ENCODE measurements at regions of chr16 and their contacts with region 1.

Region 1: GRCh38 chr16:3880623-3881498 is at the start of gene CREBBP:
- DNase-seq: peak; percentile 86 to 93 (median 88)
- H3K4me3 ChIP-seq: peak within 1 kb of the TSS; percentile 57 to 88 (median 82)
- H3K4me3 Mint-ChIP-seq: peak within 1 kb of the TSS; percentile 91 to 96
- H3K27ac ChIP-seq: peak within 1 kb of the TSS; percentile 34 to 66
- H3K27ac Mint-ChIP-seq: peak within 1 kb of the TSS in 6 of 7 donors; percentile 83 to 94 (median 92)
- H3K4me1 ChIP-seq: peaks cover 29 to 43% of the 10 kb centered on the region in 2 donors
- H3K4me1 Mint-ChIP-seq: peaks cover 36% of the 10 kb centered on the region
- H3K27me3 ChIP-seq: peaks cover 0 to 7% of the 10 kb centered on the region in 2 donors
- H3K27me3 Mint-ChIP-seq: peaks cover 4 to 21% (median 11%) of the 10 kb centered on the region in 3 donors
- CTCF ChIP-seq: no peak
- polyA plus RNA-seq, gene CREBBP: 2.1 to 26.9 (median 6.2) TPM

Region 2: GRCh38 chr16:3690470-3690928 is 190.4 kb before region 1 on chr16:
- intact Hi-C with region 1: loop called in 1 of 2 experiments (anchors 10 kb)
- DNase-seq: peak; percentile 66 to 82 (median 75)
- H3K4me3 ChIP-seq: no peak overlapping the region
- H3K4me3 Mint-ChIP-seq: peak overlapping the region; percentile 50 to 76
- H3K27ac ChIP-seq: no peak overlapping the region
- H3K27ac Mint-ChIP-seq: peak overlapping the region in 3 of 7 donors; percentile 26 to 58 (median 35)
- H3K4me1 ChIP-seq: peaks cover 6 to 7% of the 10 kb centered on the region in 2 donors
- H3K4me1 Mint-ChIP-seq: peaks cover 12% of the 10 kb centered on the region
- H3K27me3 ChIP-seq: no peaks in the 10 kb centered on the region
- H3K27me3 Mint-ChIP-seq: peaks cover 2 to 4% (median 3%) of the 10 kb centered on the region in 3 donors
- CTCF ChIP-seq: peak; percentile 94

Region 3: DNA sequence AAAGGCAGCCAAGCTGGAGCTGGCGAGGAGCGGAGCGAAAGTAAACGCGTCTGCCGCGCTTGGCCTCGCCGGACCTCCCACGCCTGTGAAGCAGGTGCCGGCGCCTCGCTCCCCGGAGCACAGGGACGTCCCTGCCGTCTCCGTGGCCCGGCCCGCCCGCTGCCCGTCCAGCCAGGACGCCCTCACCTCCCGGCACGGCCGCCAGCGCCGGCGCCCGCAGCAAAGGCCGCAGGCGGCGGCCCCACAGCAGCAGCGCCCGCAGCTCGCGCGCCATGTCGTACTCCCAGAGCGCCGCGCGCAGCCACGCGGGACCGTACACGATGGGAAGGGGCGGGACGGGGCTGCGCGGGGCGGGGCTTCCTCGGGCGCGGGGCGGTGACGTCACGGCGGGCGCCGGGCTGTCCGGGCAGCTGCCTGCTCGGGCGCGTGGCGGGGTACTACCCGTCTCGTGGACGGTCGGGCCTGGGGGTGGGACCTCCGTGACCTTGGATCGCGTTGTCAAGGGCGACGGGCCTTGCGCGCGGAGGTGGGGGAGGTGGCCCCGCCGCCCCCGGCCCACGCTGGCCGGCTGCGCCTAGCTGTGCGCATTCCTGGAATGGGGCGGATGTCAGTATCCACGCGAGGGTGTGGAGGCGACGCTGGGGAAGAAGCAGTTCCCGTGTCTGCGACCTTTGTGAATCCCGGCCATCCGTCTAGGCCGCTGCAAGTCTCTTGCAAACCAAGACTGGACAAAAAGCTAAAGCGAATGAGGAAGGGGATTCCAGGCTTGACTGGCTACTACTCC is 163.4 kb before region 1 on chr16 and contains the start of gene TRAP1:
- intact Hi-C with region 1: loop called in 1 of 2 experiments (anchors 2 kb)
- DNase-seq: peak; percentile 79 to 88 (median 82)
- H3K4me3 ChIP-seq: peak within 1 kb of the TSS; percentile 84 to 90 (median 85)
- H3K4me3 Mint-ChIP-seq: peak within 1 kb of the TSS; percentile 85 to 91
- H3K27ac ChIP-seq: peak within 1 kb of the TSS; percentile 46 to 94
- H3K27ac Mint-ChIP-seq: peak within 1 kb of the TSS; percentile 84 to 95 (median 91)
- H3K4me1 ChIP-seq: peaks cover 15 to 19% of the 10 kb centered on the region in 2 donors
- H3K4me1 Mint-ChIP-seq: peaks cover 14% of the 10 kb centered on the region
- H3K27me3 ChIP-seq: no peaks in the 10 kb centered on the region
- H3K27me3 Mint-ChIP-seq: peaks cover 1 to 6% (median 3%) of the 10 kb centered on the region in 3 donors
- CTCF ChIP-seq: no peak
- polyA plus RNA-seq, gene TRAP1: 22.8 to 54.0 (median 22.9) TPM

Region 4: GRCh38 chr16:3857189-3858043 is 23.4 kb before region 1 on chr16:
- intact Hi-C with region 1: loop called (anchors 2 kb)
- DNase-seq: peak; percentile 87 to 95 (median 94)
- H3K4me3 ChIP-seq: peak overlapping the region; percentile 13 to 68 (median 29)
- H3K4me3 Mint-ChIP-seq: peak overlapping the region; percentile 71 to 92
- H3K27ac ChIP-seq: peak overlapping the region; percentile 77 to 82
- H3K27ac Mint-ChIP-seq: peak overlapping the region; percentile 92 to 98 (median 95)
- H3K4me1 ChIP-seq: peaks cover 97 to 99% of the 10 kb centered on the region in 2 donors
- H3K4me1 Mint-ChIP-seq: peaks cover 97% of the 10 kb centered on the region
- H3K27me3 ChIP-seq: no peaks in the 10 kb centered on the region
- H3K27me3 Mint-ChIP-seq: peaks cover 0 to 4% (median 0%) of the 10 kb centered on the region in 3 donors
- CTCF ChIP-seq: no peak

Region 5: GRCh38 chr16:4106516-4106915 is 225.7 kb after region 1 on chr16:
- intact Hi-C with region 1: no loop called
- DNase-seq: no peak
- H3K4me3 ChIP-seq: no peak overlapping the region
- H3K4me3 Mint-ChIP-seq: no peak overlapping the region
- H3K27ac ChIP-seq: no peak overlapping the region
- H3K27ac Mint-ChIP-seq: peak overlapping the region in 1 of 7 donors; percentile 11
- H3K4me1 ChIP-seq: peaks cover 0 to 9% of the 10 kb centered on the region in 2 donors
- H3K4me1 Mint-ChIP-seq: peaks cover 18% of the 10 kb centered on the region
- H3K27me3 ChIP-seq: no peaks in the 10 kb centered on the region
- H3K27me3 Mint-ChIP-seq: peaks cover 0 to 3% (median 1%) of the 10 kb centered on the region in 3 donors
- CTCF ChIP-seq: no peak

Region 6: DNA sequence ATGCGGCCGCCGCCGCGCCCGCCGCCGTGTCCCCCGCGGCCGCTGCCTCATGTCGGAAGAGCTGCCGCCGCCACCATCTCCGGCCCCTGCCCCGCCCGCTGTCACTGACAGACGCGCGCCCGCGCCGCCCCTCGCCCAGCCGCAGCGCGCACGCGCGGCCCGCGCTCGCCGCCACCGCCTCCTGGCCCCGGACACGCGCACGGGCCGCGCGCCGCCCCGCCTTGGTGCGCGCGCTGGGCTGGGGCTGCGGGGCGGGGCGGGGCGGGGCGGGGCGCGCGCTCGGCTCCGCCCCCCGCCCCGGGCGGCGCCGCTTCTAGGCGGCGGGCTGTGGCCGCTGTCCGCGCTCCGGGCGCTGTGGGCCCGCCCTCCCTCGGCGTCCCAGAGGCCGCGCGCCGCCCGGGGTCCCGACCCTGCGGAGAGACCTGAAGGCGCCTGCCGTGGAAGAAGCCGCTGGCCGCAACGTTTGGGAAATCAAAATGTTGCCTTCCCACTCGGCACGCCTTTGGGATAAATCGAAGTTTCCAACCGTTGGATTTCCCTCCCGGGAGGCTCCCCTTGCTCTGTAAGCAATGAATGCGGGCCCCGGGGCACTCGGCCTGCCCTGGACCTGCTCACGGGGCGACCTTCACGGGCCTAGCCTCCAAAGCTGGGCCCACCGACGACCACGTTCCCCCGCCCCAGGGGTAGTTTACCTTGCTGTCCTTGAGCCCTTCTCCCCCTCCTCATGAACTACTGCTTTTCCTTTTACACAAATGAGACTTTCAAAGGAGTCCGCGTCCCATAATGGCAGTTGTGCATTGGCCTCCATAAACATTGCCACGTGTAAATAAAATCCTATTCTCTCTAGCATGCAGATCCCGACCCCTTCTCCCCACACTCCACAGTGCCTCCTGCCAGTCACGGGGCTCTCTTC is 235.7 kb after region 1 on chr16 and contains the start of gene ADCY9:
- intact Hi-C with region 1: no loop called
- DNase-seq: peak; percentile 66 to 86 (median 73)
- H3K4me3 ChIP-seq: peak within 1 kb of the TSS; percentile 57 to 80 (median 60)
- H3K4me3 Mint-ChIP-seq: peak within 1 kb of the TSS; percentile 79 to 94
- H3K27ac ChIP-seq: peak within 1 kb of the TSS in 1 of 2 donors; percentile 41
- H3K27ac Mint-ChIP-seq: peak within 1 kb of the TSS in 5 of 7 donors; percentile 27 to 82 (median 35)
- H3K4me1 ChIP-seq: peaks cover 41 to 46% of the 10 kb centered on the region in 2 donors
- H3K4me1 Mint-ChIP-seq: peaks cover 43% of the 10 kb centered on the region
- H3K27me3 ChIP-seq: no peaks in the 10 kb centered on the region
- H3K27me3 Mint-ChIP-seq: peaks cover 7 to 17% (median 10%) of the 10 kb centered on the region in 3 donors
- CTCF ChIP-seq: no peak
- polyA plus RNA-seq, gene ADCY9: 0.44 to 9.3 (median 0.67) TPM